ENCODE measurements at regions of chr2 and their contacts with region 1.

Region 1: DNA sequence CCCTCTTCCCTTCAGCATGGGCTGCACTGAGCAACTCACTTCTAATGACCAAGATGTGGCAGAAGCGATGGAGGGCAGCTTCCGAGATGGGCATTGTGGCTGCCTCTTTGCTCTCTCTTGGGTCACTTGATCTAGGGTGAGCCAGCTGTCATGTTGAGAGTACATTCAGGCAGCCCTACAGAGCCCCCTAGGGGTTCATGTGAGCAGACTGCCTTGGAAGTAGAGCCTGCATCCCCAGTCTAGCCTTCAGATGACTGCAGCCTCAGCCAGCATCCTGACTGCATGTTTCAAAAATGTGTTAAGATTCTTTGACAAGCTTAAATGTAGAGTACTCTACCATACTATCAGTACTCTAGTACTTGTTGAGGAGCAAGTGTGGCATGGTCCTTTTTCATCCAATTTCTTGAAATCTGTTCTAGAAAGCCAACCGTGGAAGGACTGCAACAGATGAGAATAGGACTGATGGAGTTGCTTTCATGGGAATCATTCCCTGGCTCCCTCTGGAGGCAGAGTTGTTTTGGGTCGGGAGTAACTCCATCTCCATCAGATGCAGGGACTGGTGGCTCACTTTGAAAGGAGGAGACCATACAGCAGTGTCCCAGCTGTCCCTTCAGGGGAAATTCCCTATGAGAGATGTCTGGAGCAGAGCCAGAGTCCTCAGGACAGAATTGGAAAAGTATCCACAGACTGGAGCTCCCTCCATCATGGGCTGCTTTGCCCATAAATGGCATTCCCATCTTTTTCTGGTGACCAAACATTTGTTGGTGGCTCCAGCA is 144.1 kb downstream of the NCK2 start:
- DNase-seq: no peak
- ATAC-seq: no peak
- H3K4me3 ChIP-seq: no peak overlapping the region
- H3K27ac ChIP-seq: peak overlapping the region in 1 of 2 donors; percentile 61
- H3K4me1 ChIP-seq: peaks cover 6% of the 10 kb centered on the region in 2 donors
- H3K27me3 ChIP-seq: no peaks in the 10 kb centered on the region

Region 2: DNA sequence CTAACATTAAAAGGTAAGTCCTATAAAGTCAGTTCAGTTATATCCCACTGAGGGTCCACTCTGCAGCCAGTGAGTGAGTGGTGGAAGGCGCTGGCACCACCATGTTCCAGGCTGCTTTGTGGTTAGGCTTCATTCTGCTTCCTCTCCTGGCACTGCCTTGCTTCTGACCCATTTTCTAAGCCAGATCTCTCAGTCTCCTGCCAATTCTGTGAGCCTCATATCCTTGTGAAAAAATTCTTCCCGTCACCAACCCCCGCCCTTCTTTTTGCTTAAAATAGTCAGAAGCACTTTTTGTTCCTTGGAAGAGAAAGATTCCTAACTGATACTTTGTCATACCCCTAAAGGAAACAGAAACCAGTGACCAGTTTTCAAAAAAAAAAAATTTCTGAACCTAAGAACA is 283.9 kb before region 1 on chr2:
- intact Hi-C with region 1: loop called in 1 of 2 experiments (anchors 10 kb)
- DNase-seq: peak in 1 of 2 donors; percentile 57
- ATAC-seq: peak; percentile 81
- H3K4me3 ChIP-seq: no peak overlapping the region
- H3K27ac ChIP-seq: no peak overlapping the region
- H3K4me1 ChIP-seq: no peaks in the 10 kb centered on the region
- H3K27me3 ChIP-seq: no peaks in the 10 kb centered on the region

Region 3: DNA sequence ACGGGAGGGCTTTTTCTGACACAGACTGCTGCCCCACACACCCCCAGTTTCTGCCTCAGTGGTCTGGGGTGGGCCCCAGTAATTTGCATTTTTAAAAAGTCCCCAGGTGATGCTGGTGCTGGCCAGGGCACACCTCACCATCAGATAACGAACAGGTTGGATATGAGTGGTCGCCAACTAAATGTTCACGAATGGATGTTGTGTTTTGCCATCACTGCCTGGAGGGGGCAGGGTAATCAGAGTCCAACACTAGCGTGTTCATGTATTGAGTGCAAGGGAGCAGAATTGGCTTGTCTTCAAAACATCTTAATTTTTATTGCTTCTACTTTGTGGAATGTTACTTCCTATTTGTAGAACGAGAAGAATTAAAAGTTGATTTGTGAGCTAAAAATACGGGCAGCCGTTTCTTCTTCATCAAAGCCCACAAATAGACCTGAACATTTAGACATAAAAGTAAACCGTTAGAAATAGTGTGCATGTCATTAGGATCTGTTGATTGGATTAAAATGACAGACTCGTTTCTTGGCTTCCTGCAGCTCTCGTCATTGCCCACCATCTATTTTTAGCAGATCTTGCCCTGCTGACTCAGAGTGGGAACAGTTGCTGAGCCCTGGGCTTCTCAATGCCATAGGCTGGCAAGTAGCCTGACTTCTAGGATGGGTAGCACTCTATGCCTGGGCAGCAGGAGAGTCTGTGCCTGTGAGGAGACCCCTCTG is 98.9 kb before region 1 on chr2:
- intact Hi-C with region 1: loop called (anchors 5 to 10 kb)
- DNase-seq: peak; percentile 80
- ATAC-seq: peak; percentile 80
- H3K4me3 ChIP-seq: no peak overlapping the region
- H3K27ac ChIP-seq: peak overlapping the region in 1 of 2 donors; percentile 46
- H3K4me1 ChIP-seq: peaks cover 3% of the 10 kb centered on the region in 2 donors
- H3K27me3 ChIP-seq: no peaks in the 10 kb centered on the region

Region 4: GRCh38 chr2:105977212-105977611 is 88.4 kb after region 1 on chr2:
- intact Hi-C with region 1: no loop called
- DNase-seq: no peak
- ATAC-seq: no peak
- H3K4me3 ChIP-seq: no peak overlapping the region
- H3K27ac ChIP-seq: no peak overlapping the region
- H3K4me1 ChIP-seq: no peaks in the 10 kb centered on the region
- H3K27me3 ChIP-seq: no peaks in the 10 kb centered on the region

Measured in aorta (tissue), 5 donors.